ENCODE measurements at regions of chrX and their contacts with region 1.

Region 1: GRCh38 chrX:85851418-85851817 is 195.9 kb downstream of the CHM start:
- H3K4me3 ChIP-seq: no peak overlapping the region
- H3K27ac ChIP-seq: no peak overlapping the region
- H3K4me1 ChIP-seq: no peaks in the 10 kb centered on the region
- CTCF ChIP-seq: peak; percentile 24; the same call in 1 of the 2 replicates

Region 2: DNA sequence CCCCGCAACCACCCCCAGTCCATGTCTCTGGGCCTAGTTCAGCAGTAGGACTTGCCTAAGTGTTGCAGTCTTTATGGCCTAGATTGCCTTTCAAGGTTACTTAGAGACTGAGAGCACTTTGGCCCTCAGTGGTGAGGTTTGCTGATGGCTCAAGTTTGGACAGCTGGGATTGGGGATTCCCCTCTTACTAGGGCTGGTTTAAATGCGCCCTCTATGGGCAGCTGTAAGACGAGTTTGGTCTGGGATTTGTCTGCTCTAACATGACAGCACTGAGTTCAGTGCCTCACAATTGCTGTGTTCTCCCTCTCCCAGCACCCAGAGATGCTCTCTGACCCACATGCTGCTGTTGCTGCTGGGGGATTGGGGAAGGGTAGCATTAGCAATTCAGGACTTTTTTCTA is 319.9 kb after region 1 on chrX:
- CTCF ChIA-PET with region 1: interaction called, 10 read pairs
- POLR2A ChIA-PET with region 1: no interaction called
- H3K4me3 ChIP-seq: no peak overlapping the region
- H3K27ac ChIP-seq: no peak overlapping the region
- H3K4me1 ChIP-seq: no peaks in the 10 kb centered on the region
- CTCF ChIP-seq: no peak